ENCODE measurements at regions of chr5 and their contacts with region 1.

Region 1: DNA sequence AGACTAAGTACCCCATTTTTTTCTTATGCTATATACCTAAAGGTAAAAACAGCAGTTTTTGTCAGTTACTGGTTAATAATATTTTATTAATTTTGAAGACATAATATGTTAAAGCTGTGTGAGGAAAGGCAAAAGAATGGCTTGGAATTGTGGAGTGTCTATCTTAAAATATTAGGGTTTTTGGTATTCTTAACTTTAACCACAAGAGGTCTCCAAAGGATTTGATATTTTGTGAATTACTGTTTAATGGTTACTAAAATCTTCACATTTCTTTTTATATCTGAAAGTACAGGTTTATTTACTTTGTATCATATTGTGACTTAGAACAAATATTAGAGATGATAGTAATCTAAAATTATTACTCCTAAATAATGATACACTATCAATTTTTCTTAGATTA is 32.0 kb upstream of the DHFR start:
- DNase-seq: no peak
- ATAC-seq: no peak
- H3K4me3 ChIP-seq: no peak overlapping the region
- H3K4me3 Mint-ChIP-seq: no peak overlapping the region
- H3K27ac ChIP-seq: no peak overlapping the region
- H3K27ac Mint-ChIP-seq: no peak overlapping the region
- H3K4me1 ChIP-seq: no peaks in the 10 kb centered on the region
- H3K4me1 Mint-ChIP-seq: peaks cover 5% of the 10 kb centered on the region
- H3K27me3 ChIP-seq: no peaks in the 10 kb centered on the region
- H3K27me3 Mint-ChIP-seq: no peaks in the 10 kb centered on the region
- CTCF ChIP-seq: peak; percentile 50

Region 2: GRCh38 chr5:81292130-81292529 is 605.4 kb after region 1 on chr5:
- CTCF ChIA-PET with region 1: no interaction called
- POLR2A ChIA-PET with region 1: no interaction called
- intact Hi-C with region 1: loop called (anchors 10 kb)
- DNase-seq: no peak
- ATAC-seq: no peak
- H3K4me3 ChIP-seq: no peak overlapping the region
- H3K4me3 Mint-ChIP-seq: no peak overlapping the region
- H3K27ac ChIP-seq: peak overlapping the region in 1 of 2 donors; percentile 46
- H3K27ac Mint-ChIP-seq: no peak overlapping the region
- H3K4me1 ChIP-seq: peaks cover 4 to 7% of the 10 kb centered on the region in 2 donors
- H3K4me1 Mint-ChIP-seq: peaks cover 22% of the 10 kb centered on the region
- H3K27me3 ChIP-seq: no peaks in the 10 kb centered on the region
- H3K27me3 Mint-ChIP-seq: no peaks in the 10 kb centered on the region
- CTCF ChIP-seq: no peak

Measured in B cell (primary cell).